ENCODE measurements at regions of chr12 and their contacts with region 1.

Region 1: DNA sequence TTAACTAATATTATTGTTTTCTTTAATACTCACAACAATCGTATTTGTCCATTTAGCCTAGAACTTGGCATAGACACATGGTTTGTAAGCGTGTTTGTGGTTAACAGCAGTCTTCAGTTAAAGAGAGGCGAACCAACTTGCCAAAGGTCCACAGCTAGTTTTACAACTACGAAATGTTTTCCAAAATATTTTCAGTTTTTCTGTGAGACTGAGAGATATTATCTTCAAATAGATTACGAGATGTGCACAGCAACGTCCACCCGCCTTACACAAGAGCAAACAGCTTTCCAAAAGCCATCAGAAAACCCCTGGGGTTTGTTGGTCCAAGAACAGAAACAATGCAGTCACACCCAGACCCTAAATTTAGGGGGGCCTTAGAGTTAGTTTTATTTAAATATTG is 58.6 kb upstream of the RASSF3 start:
- DNase-seq: no peak
- H3K4me3 ChIP-seq: no peak overlapping the region
- H3K27ac ChIP-seq: no peak overlapping the region
- H3K4me1 ChIP-seq: no peaks in the 10 kb centered on the region
- H3K27me3 ChIP-seq: no peaks in the 10 kb centered on the region
- CTCF ChIP-seq: no peak
- POLR2A ChIP-seq: no peak

Region 2: DNA sequence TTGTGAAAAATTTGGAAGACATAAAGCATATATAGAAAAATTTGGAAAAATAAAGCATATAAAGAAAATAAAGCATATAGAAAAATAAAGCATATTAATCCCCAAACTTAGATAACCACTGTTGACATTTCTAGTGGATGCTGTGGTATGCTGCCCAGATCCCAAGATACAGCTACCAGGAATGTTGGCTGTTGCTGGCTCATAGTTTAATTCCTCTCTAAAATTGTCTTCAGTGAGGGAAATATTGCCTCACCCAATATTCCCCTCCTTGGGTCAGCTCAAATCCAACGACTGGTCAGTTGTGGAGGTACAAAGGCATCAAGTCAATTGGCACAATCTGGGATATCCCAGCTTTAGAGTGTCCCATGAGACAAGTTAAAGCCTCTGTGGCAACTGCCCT is 319.5 kb before region 1 on chr12:
- intact Hi-C with region 1: no loop called
- DNase-seq: no peak
- H3K4me3 ChIP-seq: no peak overlapping the region
- H3K27ac ChIP-seq: no peak overlapping the region
- H3K4me1 ChIP-seq: no peaks in the 10 kb centered on the region
- H3K27me3 ChIP-seq: no peaks in the 10 kb centered on the region
- CTCF ChIP-seq: no peak
- POLR2A ChIP-seq: no peak

Region 3: DNA sequence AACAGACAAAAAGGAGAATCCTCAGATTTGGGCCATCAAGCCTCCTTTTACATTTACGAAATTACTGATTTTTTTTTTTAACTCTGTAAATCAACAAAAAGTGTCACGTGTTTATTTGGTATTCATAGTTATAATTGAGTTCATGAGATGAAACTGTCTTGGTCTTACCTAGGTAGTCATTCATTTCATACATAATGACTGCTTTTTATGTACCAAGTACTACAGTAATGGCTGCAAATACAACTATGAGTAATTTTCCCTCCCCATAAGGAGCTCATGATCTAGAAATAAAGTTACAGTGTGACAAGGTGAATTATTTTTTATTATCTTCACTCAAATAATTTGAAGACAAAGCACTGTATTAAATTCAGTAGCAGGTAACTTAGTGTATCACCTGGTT is 106.2 kb before region 1 on chr12:
- intact Hi-C with region 1: no loop called
- DNase-seq: no peak
- H3K4me3 ChIP-seq: no peak overlapping the region
- H3K27ac ChIP-seq: no peak overlapping the region
- H3K4me1 ChIP-seq: no peaks in the 10 kb centered on the region
- H3K27me3 ChIP-seq: no peaks in the 10 kb centered on the region
- CTCF ChIP-seq: no peak
- POLR2A ChIP-seq: no peak

Region 4: GRCh38 chr12:64696080-64696741 is 144.5 kb after region 1 on chr12:
- intact Hi-C with region 1: loop called (anchors 2 kb)
- DNase-seq: no peak
- H3K4me3 ChIP-seq: no peak overlapping the region
- H3K27ac ChIP-seq: no peak overlapping the region
- H3K4me1 ChIP-seq: peaks cover 0 to 3% of the 10 kb centered on the region in 2 donors
- H3K27me3 ChIP-seq: no peaks in the 10 kb centered on the region
- CTCF ChIP-seq: peak in 3 of 6 experiments; percentile 41 to 50 (median 48)
- POLR2A ChIP-seq: no peak

Measured in thyroid gland (tissue), 4 donors.